Mammary epithelial cell (primary cell): ENCODE measurements at regions of chr2 and their contacts with region 1.

Region 1: DNA sequence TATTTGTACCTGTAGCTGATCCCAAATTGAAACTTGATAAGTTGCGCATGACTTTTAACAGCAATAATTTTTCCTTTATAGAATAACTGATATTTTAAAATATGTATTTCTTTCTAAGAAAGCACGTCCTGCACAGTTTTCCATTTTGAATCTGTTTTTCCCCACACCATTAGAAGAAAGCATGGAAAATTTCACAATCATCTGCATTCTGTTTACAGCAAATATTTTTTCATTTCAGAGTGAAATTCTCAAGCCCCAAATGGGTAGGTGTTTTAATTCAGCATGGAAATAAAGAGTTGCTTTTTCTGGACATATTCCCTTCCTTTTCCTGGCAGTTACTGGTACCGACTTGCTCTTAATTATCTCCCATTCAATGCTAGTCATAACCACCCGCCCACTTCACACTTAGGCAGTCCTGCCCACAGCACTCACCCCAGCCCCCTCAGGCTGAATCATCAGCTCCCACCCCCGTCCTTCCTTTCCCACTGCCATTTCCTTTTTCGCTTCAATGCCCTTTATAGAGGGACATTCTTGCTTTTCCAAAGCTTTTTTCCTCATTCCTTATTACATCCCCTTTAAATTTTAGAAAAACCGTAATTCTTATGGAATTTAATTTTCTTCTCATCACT is 89.2 kb upstream of the GLS start:
- DNase-seq: peak; percentile 71
- H3K4me3 ChIP-seq: peak overlapping the region in 1 of 3 experiments; percentile 11
- H3K27ac ChIP-seq: peak overlapping the region; percentile 37
- H3K4me1 ChIP-seq: peaks cover 29% of the 10 kb centered on the region
- H3K27me3 ChIP-seq: no peaks in the 10 kb centered on the region
- CTCF ChIP-seq: no peak

Region 2: GRCh38 chr2:190679813-190680591 is 111.5 kb before region 1 on chr2:
- CTCF ChIA-PET with region 1: interaction called, 15 read pairs
- dilution Hi-C with region 1: no loop called
- in situ Hi-C with region 1: no loop called
- intact Hi-C with region 1: no loop called
- DNase-seq: peak; percentile 32
- H3K4me3 ChIP-seq: no peak overlapping the region
- H3K27ac ChIP-seq: no peak overlapping the region
- H3K4me1 ChIP-seq: peaks cover 3% of the 10 kb centered on the region
- H3K27me3 ChIP-seq: no peaks in the 10 kb centered on the region
- CTCF ChIP-seq: peak; percentile 48 to 62

Region 3: GRCh38 chr2:190718652-190719526 is 72.6 kb before region 1 on chr2:
- CTCF ChIA-PET with region 1: no interaction called
- dilution Hi-C with region 1: loop called (anchors 5 kb)
- in situ Hi-C with region 1: no loop called
- intact Hi-C with region 1: no loop called
- DNase-seq: peak; percentile 94
- H3K4me3 ChIP-seq: no peak overlapping the region
- H3K27ac ChIP-seq: peak overlapping the region; percentile 63
- H3K4me1 ChIP-seq: peaks cover 52% of the 10 kb centered on the region
- H3K27me3 ChIP-seq: no peaks in the 10 kb centered on the region
- CTCF ChIP-seq: no peak

Region 4: DNA sequence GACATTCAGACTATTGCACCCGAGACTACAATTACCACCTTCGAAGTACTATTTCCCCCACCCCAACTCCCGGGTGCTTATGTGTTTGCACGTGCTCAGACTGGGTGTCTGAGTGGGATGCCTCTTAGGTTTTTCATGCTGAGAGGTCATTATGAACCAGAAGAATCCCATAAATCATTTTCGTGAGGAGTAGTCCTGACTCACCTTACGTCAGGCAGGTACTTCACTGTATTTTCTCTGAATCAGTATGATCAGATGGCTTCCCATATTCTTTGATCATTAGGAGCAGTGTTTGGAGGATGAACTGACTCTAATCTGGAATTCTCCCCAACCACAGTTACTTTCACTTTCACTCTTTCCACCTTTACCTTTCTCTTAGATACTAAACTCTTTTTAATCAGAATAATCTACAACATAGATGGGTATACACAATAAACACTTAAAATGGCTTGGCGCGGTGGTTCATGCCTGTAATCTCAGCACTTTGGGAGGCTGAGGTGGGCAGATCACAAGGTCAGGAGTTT is 397.7 kb after region 1 on chr2:
- CTCF ChIA-PET with region 1: no interaction called
- dilution Hi-C with region 1: no loop called
- in situ Hi-C with region 1: no loop called
- intact Hi-C with region 1: no loop called
- DNase-seq: peak; percentile 22
- H3K4me3 ChIP-seq: no peak overlapping the region
- H3K27ac ChIP-seq: no peak overlapping the region
- H3K4me1 ChIP-seq: peaks cover 12% of the 10 kb centered on the region
- H3K27me3 ChIP-seq: no peaks in the 10 kb centered on the region
- CTCF ChIP-seq: no peak